Left lung (tissue), 14 donors: ENCODE measurements at regions of chr11 and their contacts with region 1.

Region 1: DNA sequence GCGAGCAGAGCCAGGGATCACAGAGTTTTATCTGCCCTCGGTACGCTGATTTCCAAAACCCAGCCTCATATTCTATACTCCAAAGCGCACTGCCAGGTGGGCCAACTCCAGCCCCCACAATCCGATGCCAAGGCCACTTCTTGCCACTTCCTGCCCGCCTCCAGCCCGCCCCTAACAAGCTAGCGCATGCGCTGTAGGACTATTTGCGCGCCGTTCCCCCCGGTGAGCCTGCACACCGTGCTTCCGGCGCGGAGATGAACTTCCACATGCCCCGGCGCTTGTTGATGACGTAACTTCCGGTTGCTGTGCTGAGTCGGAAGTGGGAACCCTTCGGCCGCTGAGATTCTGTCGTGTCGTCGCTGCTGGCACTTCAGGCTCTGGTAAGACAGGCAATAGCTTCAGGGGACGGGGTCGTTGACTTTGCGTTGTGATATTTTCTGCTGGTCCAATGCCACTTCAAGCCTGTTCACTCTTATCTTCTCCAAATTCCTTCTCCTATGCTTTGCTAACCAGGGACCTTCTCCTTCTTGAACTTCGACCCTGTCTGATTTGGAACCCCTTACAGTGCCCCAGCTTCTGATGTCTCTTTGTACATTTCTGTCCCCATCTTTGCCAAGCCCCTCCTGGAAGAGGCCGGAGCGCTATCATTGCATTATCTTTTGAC is at the start of gene UBE4A:
- DNase-seq: peak; percentile 93 to 96 (median 96)
- ATAC-seq: peak; percentile 95
- H3K4me3 ChIP-seq: peak within 1 kb of the TSS; percentile 70 to 71
- H3K27ac ChIP-seq: peak within 1 kb of the TSS; percentile 29 to 73
- H3K4me1 ChIP-seq: peaks cover 6 to 32% of the 10 kb centered on the region in 2 donors
- H3K27me3 ChIP-seq: no peaks in the 10 kb centered on the region
- CTCF ChIP-seq: no peak
- polyA plus RNA-seq, gene UBE4A: 40.3 to 47.7 (median 44.0) TPM

Region 2: GRCh38 chr11:118145285-118146227 is 213.9 kb before region 1 on chr11:
- intact Hi-C with region 1: loop called in 1 of 2 experiments (anchors 10 kb)
- DNase-seq: peak; percentile 77 to 98 (median 88)
- ATAC-seq: peak; percentile 99
- H3K4me3 ChIP-seq: peak overlapping the region; percentile 48 to 58
- H3K27ac ChIP-seq: no peak overlapping the region
- H3K4me1 ChIP-seq: peaks cover 0 to 24% of the 10 kb centered on the region in 2 donors
- H3K27me3 ChIP-seq: peaks cover 0 to 63% of the 10 kb centered on the region in 2 donors
- CTCF ChIP-seq: peak; percentile 92 to 96

Region 3: DNA sequence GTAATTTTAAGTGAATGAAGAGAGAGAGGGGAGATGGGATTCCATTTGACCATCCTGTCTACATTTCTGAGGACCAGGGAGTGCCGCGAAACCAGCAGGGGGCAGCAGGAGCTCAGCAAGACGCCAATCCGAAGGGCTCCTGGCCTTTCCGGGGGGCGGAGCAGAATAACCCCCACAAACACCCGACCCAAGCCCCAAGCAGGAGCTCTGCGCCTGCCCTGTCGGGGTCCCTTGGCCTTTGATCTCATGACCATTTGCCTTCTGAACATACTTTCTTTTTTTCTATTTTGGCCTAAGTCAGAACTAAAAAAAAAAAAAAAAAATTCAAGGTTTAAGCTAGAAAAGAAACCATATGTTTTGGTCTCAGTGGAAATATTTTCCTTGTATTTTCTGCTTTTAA is 161.1 kb before region 1 on chr11:
- intact Hi-C with region 1: loop called in 1 of 2 experiments (anchors 10 kb)
- DNase-seq: peak; percentile 64 to 92 (median 79)
- ATAC-seq: peak; percentile 76
- H3K4me3 ChIP-seq: no peak overlapping the region
- H3K27ac ChIP-seq: peak overlapping the region in 1 of 2 donors; percentile 8
- H3K4me1 ChIP-seq: peaks cover 0 to 22% of the 10 kb centered on the region in 2 donors
- H3K27me3 ChIP-seq: no peaks in the 10 kb centered on the region
- CTCF ChIP-seq: peak; percentile 81 to 84